ENCODE measurements at regions of chr7 and their contacts with region 1.

Region 1: GRCh38 chr7:156668181-156668624 is 27.6 kb downstream of the RNF32 start:
- DNase-seq: peak; percentile 59 to 78
- H3K4me3 ChIP-seq: no peak overlapping the region
- H3K4me3 Mint-ChIP-seq: peak overlapping the region; percentile 45
- H3K27ac Mint-ChIP-seq: peak overlapping the region; percentile 88
- H3K4me1 ChIP-seq: peaks cover 55% of the 10 kb centered on the region
- H3K4me1 Mint-ChIP-seq: peaks cover 47% of the 10 kb centered on the region
- H3K27me3 ChIP-seq: no peaks in the 10 kb centered on the region
- H3K27me3 Mint-ChIP-seq: no peaks in the 10 kb centered on the region
- CTCF ChIP-seq: no peak

Region 2: DNA sequence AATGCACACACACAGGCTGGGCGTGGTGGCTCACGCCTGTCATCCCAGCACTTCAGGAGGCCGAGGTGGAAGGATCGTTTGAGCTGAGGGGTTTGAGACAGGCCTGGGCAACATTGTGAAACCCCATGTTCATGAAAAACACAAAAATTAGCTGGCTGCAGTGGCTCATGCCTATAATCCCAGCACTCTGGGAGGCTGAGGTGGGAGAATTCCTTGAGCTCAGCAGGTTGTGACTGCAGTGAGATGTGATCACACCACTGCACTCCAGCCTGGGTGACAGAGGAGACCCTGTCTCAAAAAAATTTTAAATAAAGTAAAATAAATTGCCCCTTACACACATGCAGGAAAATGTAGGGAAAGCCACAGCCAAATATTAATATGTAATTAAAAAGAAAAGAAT is 16.5 kb after region 1 on chr7:
- CTCF ChIA-PET with region 1: interaction called, 3 read pairs
- POLR2A ChIA-PET with region 1: no interaction called
- intact Hi-C with region 1: loop called (anchors 1 kb)
- DNase-seq: no peak
- H3K4me3 ChIP-seq: no peak overlapping the region
- H3K4me3 Mint-ChIP-seq: no peak overlapping the region
- H3K27ac Mint-ChIP-seq: no peak overlapping the region
- H3K4me1 ChIP-seq: peaks cover 29% of the 10 kb centered on the region
- H3K4me1 Mint-ChIP-seq: peaks cover 16% of the 10 kb centered on the region
- H3K27me3 ChIP-seq: no peaks in the 10 kb centered on the region
- H3K27me3 Mint-ChIP-seq: no peaks in the 10 kb centered on the region
- CTCF ChIP-seq: no peak

Region 3: GRCh38 chr7:156747691-156748090 is 79.5 kb after region 1 on chr7:
- CTCF ChIA-PET with region 1: no interaction called
- POLR2A ChIA-PET with region 1: no interaction called
- intact Hi-C with region 1: loop called (anchors 1 kb)
- DNase-seq: peak in 1 of 2 experiments; percentile 35
- H3K4me3 ChIP-seq: no peak overlapping the region
- H3K4me3 Mint-ChIP-seq: no peak overlapping the region
- H3K27ac Mint-ChIP-seq: no peak overlapping the region
- H3K4me1 ChIP-seq: peaks cover 45% of the 10 kb centered on the region
- H3K4me1 Mint-ChIP-seq: peaks cover 12% of the 10 kb centered on the region
- H3K27me3 ChIP-seq: no peaks in the 10 kb centered on the region
- H3K27me3 Mint-ChIP-seq: no peaks in the 10 kb centered on the region
- CTCF ChIP-seq: no peak